MCF 10A (cell line): ENCODE measurements at regions of chr10 and their contacts with region 1.

Region 1: GRCh38 chr10:92592761-92593618 is at the start of gene KIF11:
- DNase-seq: peak; percentile 98
- H3K4me3 Mint-ChIP-seq: peak within 1 kb of the TSS; percentile 99
- H3K27ac Mint-ChIP-seq: peak within 1 kb of the TSS; percentile 97
- H3K4me1 Mint-ChIP-seq: peaks cover 35% of the 10 kb centered on the region
- H3K27me3 Mint-ChIP-seq: no peaks in the 10 kb centered on the region
- CTCF ChIP-seq: no peak
- total RNA-seq, gene KIF11: 21.3 and 27.3 TPM in 2 replicates

Region 2: DNA sequence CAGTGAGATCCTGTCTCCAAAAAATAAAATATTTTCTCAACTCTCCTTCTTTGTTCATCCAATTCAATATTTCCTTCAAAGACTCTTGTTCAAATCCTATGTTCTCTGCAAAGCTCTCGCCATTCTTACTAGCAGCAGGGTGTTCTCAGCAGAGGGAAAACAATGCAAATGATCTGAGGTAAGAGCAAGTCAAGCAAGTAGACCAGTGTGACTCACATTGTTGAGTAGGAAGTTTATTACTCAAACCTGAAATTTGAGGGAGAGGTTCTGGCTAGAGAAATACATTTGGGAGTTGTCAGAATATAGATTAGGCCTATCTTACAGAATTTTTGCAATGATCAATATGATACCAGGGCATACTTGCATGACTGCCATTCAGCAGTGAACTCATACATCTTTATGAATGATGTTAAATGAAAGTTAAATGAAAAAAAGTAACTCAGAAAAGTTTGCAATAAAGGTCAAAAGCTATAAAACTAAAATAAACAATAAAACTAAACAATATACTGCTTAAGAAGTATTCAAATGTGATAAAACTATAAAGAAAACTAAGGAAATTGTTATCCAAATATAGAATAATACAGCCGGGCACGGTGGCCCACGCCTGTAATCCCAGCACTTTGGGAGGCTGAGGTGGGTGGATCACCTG is 24.9 kb before region 1 on chr10:
- CTCF ChIA-PET with region 1: interaction called, 5 read pairs
- POLR2A ChIA-PET with region 1: interaction called, 157 read pairs
- intact Hi-C with region 1: no loop called
- DNase-seq: peak; percentile 68
- H3K4me3 Mint-ChIP-seq: peak overlapping the region; percentile 28
- H3K27ac Mint-ChIP-seq: peak overlapping the region; percentile 20
- H3K4me1 Mint-ChIP-seq: peaks cover 49% of the 10 kb centered on the region
- H3K27me3 Mint-ChIP-seq: no peaks in the 10 kb centered on the region
- CTCF ChIP-seq: no peak

Region 3: GRCh38 chr10:92604841-92605240 is 11.9 kb after region 1 on chr10:
- CTCF ChIA-PET with region 1: interaction called, 4 read pairs
- POLR2A ChIA-PET with region 1: interaction called, 44 read pairs
- intact Hi-C with region 1: no loop called
- DNase-seq: no peak
- H3K4me3 Mint-ChIP-seq: no peak overlapping the region
- H3K27ac Mint-ChIP-seq: peak overlapping the region; percentile 94
- H3K4me1 Mint-ChIP-seq: peaks cover 36% of the 10 kb centered on the region
- H3K27me3 Mint-ChIP-seq: no peaks in the 10 kb centered on the region
- CTCF ChIP-seq: no peak

Region 4: DNA sequence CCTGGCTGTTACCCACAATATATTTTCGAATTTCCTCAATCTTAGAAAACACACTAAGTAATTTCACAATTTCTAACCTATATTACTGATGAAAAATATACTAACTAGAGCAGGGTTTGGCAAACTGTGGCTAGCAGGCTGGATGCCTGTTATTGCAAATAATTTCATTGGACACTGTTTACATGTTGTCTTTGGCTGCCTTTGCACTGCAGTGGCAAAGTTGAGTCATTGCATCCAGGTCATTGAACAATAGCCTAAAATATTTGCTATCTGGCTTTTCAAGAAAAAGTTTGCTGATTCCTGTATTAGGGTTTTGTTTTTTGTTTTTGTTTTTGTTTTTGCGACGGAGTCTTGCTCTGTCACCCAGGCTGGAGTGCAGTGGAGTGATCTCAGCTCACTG is 47.1 kb after region 1 on chr10:
- CTCF ChIA-PET with region 1: interaction called, 4 read pairs
- POLR2A ChIA-PET with region 1: interaction called, 9 read pairs
- intact Hi-C with region 1: loop called (anchors 1 kb)
- DNase-seq: peak; percentile 82
- H3K4me3 Mint-ChIP-seq: no peak overlapping the region
- H3K27ac Mint-ChIP-seq: no peak overlapping the region
- H3K4me1 Mint-ChIP-seq: peaks cover 5% of the 10 kb centered on the region
- H3K27me3 Mint-ChIP-seq: no peaks in the 10 kb centered on the region
- CTCF ChIP-seq: no peak

Region 5: DNA sequence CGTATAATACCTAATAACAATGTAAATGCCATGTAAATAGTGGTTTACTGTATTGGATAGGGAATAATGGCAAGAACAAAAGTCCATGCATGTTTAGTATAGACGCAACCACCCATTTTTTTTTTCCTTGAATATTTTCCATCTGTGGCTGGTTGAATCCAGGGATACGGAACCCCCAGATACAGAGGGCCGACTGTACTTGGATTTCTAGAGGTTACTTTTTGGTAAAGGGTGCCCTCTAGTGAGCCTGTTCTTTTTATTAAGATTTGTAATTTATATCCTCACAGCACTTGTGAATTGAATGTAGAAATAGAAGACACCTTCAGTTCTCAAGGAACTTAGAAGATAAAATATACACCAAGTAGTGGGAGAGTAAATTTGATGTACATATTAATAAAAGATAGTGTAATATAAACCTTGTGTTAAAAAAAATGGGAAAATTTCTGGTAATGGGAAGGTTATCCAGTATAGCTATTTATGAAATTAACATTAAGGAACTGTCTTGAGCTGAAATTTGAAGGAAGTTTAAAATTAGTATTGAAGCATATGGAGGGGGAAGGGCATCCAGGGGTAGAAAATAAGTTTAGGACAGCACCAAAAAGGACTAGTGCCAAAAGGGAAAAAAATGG is 287.4 kb after region 1 on chr10:
- CTCF ChIA-PET with region 1: no interaction called
- POLR2A ChIA-PET with region 1: interaction called, 4 read pairs
- intact Hi-C with region 1: loop called (anchors 1 kb)
- DNase-seq: peak; percentile 59
- H3K4me3 Mint-ChIP-seq: no peak overlapping the region
- H3K27ac Mint-ChIP-seq: no peak overlapping the region
- H3K4me1 Mint-ChIP-seq: no peaks in the 10 kb centered on the region
- H3K27me3 Mint-ChIP-seq: no peaks in the 10 kb centered on the region
- CTCF ChIP-seq: peak; percentile 39